Endothelial cell of umbilical vein (primary cell): ENCODE measurements at regions of chr16 and their contacts with region 1.

Region 1: GRCh38 chr16:64132759-64133361 is 989.0 kb downstream of the CDH11 start:
- DNase-seq: no peak
- H3K4me3 ChIP-seq: no peak overlapping the region
- H3K27ac ChIP-seq: no peak overlapping the region
- H3K4me1 ChIP-seq: no peaks in the 10 kb centered on the region
- H3K27me3 ChIP-seq: no peaks in the 10 kb centered on the region
- CTCF ChIP-seq: no peak
- POLR2A ChIP-seq: no peak

Region 2: GRCh38 chr16:64109241-64109640 is 23.6 kb before region 1 on chr16:
- CTCF ChIA-PET with region 1: no interaction called
- POLR2A ChIA-PET with region 1: no interaction called
- dilution Hi-C with region 1: no loop called
- intact Hi-C with region 1: loop called (anchors 1 kb)
- DNase-seq: no peak
- H3K4me3 ChIP-seq: no peak overlapping the region
- H3K27ac ChIP-seq: no peak overlapping the region
- H3K4me1 ChIP-seq: no peaks in the 10 kb centered on the region
- H3K27me3 ChIP-seq: no peaks in the 10 kb centered on the region
- CTCF ChIP-seq: no peak
- POLR2A ChIP-seq: no peak